ENCODE measurements at regions of chr3 and their contacts with region 1.

Region 1: GRCh38 chr3:189041482-189042090 is 130.2 kb upstream of the TPRG1 start:
- DNase-seq: peak; percentile 33 to 74 (median 70)
- ATAC-seq: peak; percentile 97
- H3K4me3 ChIP-seq: no peak overlapping the region
- H3K4me3 Mint-ChIP-seq: peak overlapping the region in 1 of 10 donors; percentile 61
- H3K27ac ChIP-seq: no peak overlapping the region
- H3K27ac Mint-ChIP-seq: peak overlapping the region in 3 of 9 donors; percentile 9 to 71 (median 41)
- H3K4me1 ChIP-seq: no peaks in the 10 kb centered on the region
- H3K4me1 Mint-ChIP-seq: peaks cover 0 to 52% (median 4%) of the 10 kb centered on the region in 7 donors
- H3K27me3 ChIP-seq: no peaks in the 10 kb centered on the region
- H3K27me3 Mint-ChIP-seq: no peaks in the 10 kb centered on the region

Region 2: GRCh38 chr3:187368251-187369088 is 1673.1 kb before region 1 on chr3 and contains the start of gene RTP4:
- CTCF ChIA-PET with region 1: no interaction called
- POLR2A ChIA-PET with region 1: no interaction called
- intact Hi-C with region 1: loop called in 1 of 2 experiments (anchors 5 kb)
- DNase-seq: peak in 8 of 9 donors; percentile 25 to 70 (median 55)
- ATAC-seq: peak; percentile 86
- H3K4me3 ChIP-seq: peak within 1 kb of the TSS; percentile 85
- H3K4me3 Mint-ChIP-seq: peak within 1 kb of the TSS; percentile 89 to 100 (median 98)
- H3K27ac ChIP-seq: peak within 1 kb of the TSS; percentile 78
- H3K27ac Mint-ChIP-seq: peak within 1 kb of the TSS; percentile 94 to 100 (median 98)
- H3K4me1 ChIP-seq: peaks cover 9 to 13% of the 10 kb centered on the region in 2 donors
- H3K4me1 Mint-ChIP-seq: peaks cover 22 to 42% (median 29%) of the 10 kb centered on the region in 7 donors
- H3K27me3 ChIP-seq: no peaks in the 10 kb centered on the region
- H3K27me3 Mint-ChIP-seq: no peaks in the 10 kb centered on the region
- total RNA-seq, gene RTP4: 1.6 to 23.1 (median 5.5) TPM

Region 3: DNA sequence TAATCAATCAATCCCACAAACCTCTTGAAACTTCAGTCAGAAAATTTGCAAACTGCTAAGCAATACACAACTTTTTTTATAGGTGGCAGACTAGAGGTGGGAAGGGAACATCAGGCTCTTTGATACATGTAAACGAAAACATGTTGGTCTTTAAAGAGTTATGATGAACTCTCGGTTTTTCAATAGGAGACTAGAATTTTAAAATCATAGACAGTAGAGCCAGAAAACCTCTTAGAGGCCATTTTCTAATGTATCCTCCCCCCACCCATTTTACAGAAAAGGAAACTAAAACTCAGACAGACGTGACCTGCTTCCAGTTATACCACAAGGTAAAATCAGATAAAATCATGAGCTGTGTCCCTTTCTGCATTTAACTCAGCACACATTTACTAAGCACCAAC is 1066.7 kb before region 1 on chr3:
- CTCF ChIA-PET with region 1: no interaction called
- POLR2A ChIA-PET with region 1: no interaction called
- intact Hi-C with region 1: loop called in 1 of 2 experiments (anchors 5 kb)
- DNase-seq: peak in 6 of 9 donors; percentile 8 to 42 (median 32)
- ATAC-seq: peak; percentile 67
- H3K4me3 ChIP-seq: peak overlapping the region; percentile 3
- H3K4me3 Mint-ChIP-seq: peak overlapping the region; percentile 41 to 85 (median 76)
- H3K27ac ChIP-seq: no peak overlapping the region
- H3K27ac Mint-ChIP-seq: peak overlapping the region; percentile 44 to 96 (median 80)
- H3K4me1 ChIP-seq: peaks cover 36 to 40% of the 10 kb centered on the region in 2 donors
- H3K4me1 Mint-ChIP-seq: peaks cover 31 to 71% (median 49%) of the 10 kb centered on the region in 7 donors
- H3K27me3 ChIP-seq: no peaks in the 10 kb centered on the region
- H3K27me3 Mint-ChIP-seq: no peaks in the 10 kb centered on the region

Region 4: GRCh38 chr3:188749010-188749617 is 292.5 kb before region 1 on chr3:
- CTCF ChIA-PET with region 1: no interaction called
- POLR2A ChIA-PET with region 1: no interaction called
- intact Hi-C with region 1: loop called in 1 of 2 experiments (anchors 10 kb)
- DNase-seq: peak in 8 of 9 donors; percentile 25 to 62 (median 46)
- ATAC-seq: peak; percentile 82
- H3K4me3 ChIP-seq: no peak overlapping the region
- H3K4me3 Mint-ChIP-seq: no peak overlapping the region
- H3K27ac ChIP-seq: no peak overlapping the region
- H3K27ac Mint-ChIP-seq: no peak overlapping the region
- H3K4me1 ChIP-seq: no peaks in the 10 kb centered on the region
- H3K4me1 Mint-ChIP-seq: peaks cover 0 to 17% (median 0%) of the 10 kb centered on the region in 7 donors
- H3K27me3 ChIP-seq: no peaks in the 10 kb centered on the region
- H3K27me3 Mint-ChIP-seq: no peaks in the 10 kb centered on the region

Region 5: GRCh38 chr3:188914552-188914951 is 127.0 kb before region 1 on chr3:
- CTCF ChIA-PET with region 1: no interaction called
- POLR2A ChIA-PET with region 1: no interaction called
- intact Hi-C with region 1: loop called in 1 of 2 experiments (anchors 1 kb)
- DNase-seq: no peak
- ATAC-seq: peak; percentile 70
- H3K4me3 ChIP-seq: no peak overlapping the region
- H3K4me3 Mint-ChIP-seq: peak overlapping the region in 1 of 10 donors; percentile 41
- H3K27ac ChIP-seq: no peak overlapping the region
- H3K27ac Mint-ChIP-seq: peak overlapping the region in 2 of 9 donors; percentile 28 to 34
- H3K4me1 ChIP-seq: peaks cover 16 to 18% of the 10 kb centered on the region in 2 donors
- H3K4me1 Mint-ChIP-seq: peaks cover 21 to 42% (median 32%) of the 10 kb centered on the region in 7 donors
- H3K27me3 ChIP-seq: no peaks in the 10 kb centered on the region
- H3K27me3 Mint-ChIP-seq: no peaks in the 10 kb centered on the region

Region 6: DNA sequence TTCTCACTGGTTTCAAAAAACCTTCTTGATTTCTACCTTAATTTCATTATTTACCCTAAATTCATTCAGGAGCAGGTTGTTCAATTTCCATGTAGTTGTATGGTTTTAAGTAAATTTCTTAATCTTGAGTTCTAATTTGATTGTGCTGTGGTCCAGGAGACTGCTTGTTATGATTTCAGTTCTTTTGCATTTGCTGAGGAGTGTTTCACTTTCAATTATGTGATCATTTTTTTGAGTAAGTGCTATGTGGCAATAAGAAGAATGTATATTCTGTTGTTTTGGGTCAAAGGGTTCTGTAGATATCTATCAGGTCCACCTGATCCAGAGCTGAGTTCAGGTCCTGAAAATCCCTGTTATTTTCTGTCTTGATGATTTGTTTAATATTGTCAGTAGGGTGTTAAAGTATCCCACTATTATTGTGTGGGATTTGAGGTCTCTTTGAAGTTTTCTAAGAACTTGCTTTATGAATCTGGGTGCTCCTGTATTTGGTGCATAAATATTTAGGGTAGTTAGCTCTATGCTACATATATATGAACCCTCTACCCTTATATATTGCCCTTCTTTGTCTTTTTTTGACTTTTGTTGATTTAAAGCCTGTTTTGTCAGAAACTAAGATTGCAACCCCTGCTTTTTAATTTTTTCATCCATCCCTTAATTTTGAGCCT is 28.2 kb before region 1 on chr3:
- CTCF ChIA-PET with region 1: interaction called, 3 read pairs
- POLR2A ChIA-PET with region 1: no interaction called
- intact Hi-C with region 1: loop called in 1 of 2 experiments (anchors 1 kb)
- DNase-seq: no peak
- ATAC-seq: no peak
- H3K4me3 ChIP-seq: no peak overlapping the region
- H3K4me3 Mint-ChIP-seq: peak overlapping the region in 1 of 10 donors; percentile 36
- H3K27ac ChIP-seq: no peak overlapping the region
- H3K27ac Mint-ChIP-seq: peak overlapping the region in 1 of 9 donors; percentile 7
- H3K4me1 ChIP-seq: no peaks in the 10 kb centered on the region
- H3K4me1 Mint-ChIP-seq: peaks cover 0 to 23% (median 16%) of the 10 kb centered on the region in 7 donors
- H3K27me3 ChIP-seq: no peaks in the 10 kb centered on the region
- H3K27me3 Mint-ChIP-seq: peaks cover 0 to 29% (median 0%) of the 10 kb centered on the region in 5 donors

Region 7: DNA sequence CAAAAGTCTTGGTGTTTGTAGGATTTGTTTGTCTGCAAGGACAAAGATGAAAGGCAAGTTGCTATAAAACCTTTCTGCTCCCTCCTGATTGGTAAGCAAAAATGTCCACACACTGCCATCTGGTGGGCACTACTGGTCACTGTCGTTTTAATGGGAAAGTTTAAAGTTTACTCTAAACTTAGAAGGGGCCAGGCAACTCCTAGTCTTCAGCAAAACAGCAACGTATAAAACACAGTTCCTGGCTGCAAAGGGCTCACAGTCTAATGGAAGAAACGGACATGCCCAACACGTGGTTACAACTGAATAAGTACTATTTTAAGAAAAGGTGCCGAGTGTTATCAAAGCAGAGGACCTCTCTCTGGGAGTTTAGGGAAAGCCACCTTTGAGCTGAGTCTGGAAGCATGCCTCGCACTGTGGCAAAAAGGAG is 106.5 kb after region 1 on chr3:
- CTCF ChIA-PET with region 1: interaction called, 8 read pairs
- POLR2A ChIA-PET with region 1: no interaction called
- intact Hi-C with region 1: loop called (anchors 1 kb)
- DNase-seq: peak; percentile 22 to 61 (median 51)
- ATAC-seq: peak; percentile 85
- H3K4me3 ChIP-seq: no peak overlapping the region
- H3K4me3 Mint-ChIP-seq: no peak overlapping the region
- H3K27ac ChIP-seq: no peak overlapping the region
- H3K27ac Mint-ChIP-seq: peak overlapping the region in 1 of 9 donors; percentile 21
- H3K4me1 ChIP-seq: peaks cover 0 to 16% of the 10 kb centered on the region in 2 donors
- H3K4me1 Mint-ChIP-seq: peaks cover 6 to 35% (median 8%) of the 10 kb centered on the region in 7 donors
- H3K27me3 ChIP-seq: no peaks in the 10 kb centered on the region
- H3K27me3 Mint-ChIP-seq: peaks cover 0 to 20% (median 0%) of the 10 kb centered on the region in 5 donors

Region 8: GRCh38 chr3:189467451-189467850 is 425.9 kb after region 1 on chr3:
- CTCF ChIA-PET with region 1: no interaction called
- POLR2A ChIA-PET with region 1: no interaction called
- intact Hi-C with region 1: no loop called
- DNase-seq: no peak
- ATAC-seq: no peak
- H3K4me3 ChIP-seq: no peak overlapping the region
- H3K4me3 Mint-ChIP-seq: no peak overlapping the region
- H3K27ac ChIP-seq: no peak overlapping the region
- H3K27ac Mint-ChIP-seq: no peak overlapping the region
- H3K4me1 ChIP-seq: no peaks in the 10 kb centered on the region
- H3K4me1 Mint-ChIP-seq: peaks cover 0 to 1% (median 0%) of the 10 kb centered on the region in 7 donors
- H3K27me3 ChIP-seq: no peaks in the 10 kb centered on the region
- H3K27me3 Mint-ChIP-seq: no peaks in the 10 kb centered on the region